Panc1 (cell line): ENCODE measurements at regions of chr17 and their contacts with region 1.

Region 1: GRCh38 chr17:76045844-76046463 is 18.8 kb upstream of the EVPL start:
- DNase-seq: no peak
- ATAC-seq: no peak
- H3K4me3 ChIP-seq: no peak overlapping the region
- H3K27ac ChIP-seq: no peak overlapping the region
- H3K4me1 ChIP-seq: no peaks in the 10 kb centered on the region
- H3K27me3 ChIP-seq: no peaks in the 10 kb centered on the region
- CTCF ChIP-seq: no peak

Region 2: DNA sequence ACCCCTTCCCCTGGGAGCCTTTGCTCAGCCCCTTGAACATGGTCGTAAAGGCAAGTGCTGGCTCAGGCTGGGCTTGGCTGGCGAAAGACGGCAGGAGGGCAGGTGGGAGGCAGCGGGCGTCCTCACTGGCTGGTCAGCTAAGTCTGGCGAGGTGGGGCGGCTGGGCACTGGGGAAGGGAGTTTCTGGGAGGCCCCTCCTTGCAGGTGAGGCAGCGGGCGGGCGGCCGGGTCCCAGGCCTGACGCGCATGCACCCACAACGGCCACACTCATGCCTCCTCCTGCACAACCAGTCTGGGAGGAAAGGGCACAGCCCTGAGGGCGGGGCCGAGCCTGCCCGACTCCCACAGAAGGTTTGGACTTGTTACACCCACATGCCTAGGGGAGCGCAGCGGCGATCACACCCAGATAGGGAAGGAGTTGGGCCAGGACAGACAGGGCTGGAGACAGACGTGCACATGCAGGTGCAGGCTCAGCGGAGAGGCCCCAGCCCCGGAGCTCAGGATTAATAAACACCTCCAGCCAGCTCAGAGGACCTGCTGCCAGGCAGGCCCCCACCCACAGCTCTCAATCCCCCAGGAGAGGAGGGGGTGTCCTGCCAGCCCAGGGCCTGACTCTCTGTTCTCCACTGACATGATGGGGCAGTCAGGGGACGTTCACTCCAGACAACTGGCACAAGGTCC is 18.7 kb before region 1 on chr17 and contains the start of gene EVPL:
- CTCF ChIA-PET with region 1: no interaction called
- POLR2A ChIA-PET with region 1: no interaction called
- in situ Hi-C with region 1: no loop called
- intact Hi-C with region 1: no loop called
- DNase-seq: no peak
- ATAC-seq: peak; percentile 93
- H3K4me3 ChIP-seq: peak within 1 kb of the TSS; percentile 59 to 63
- H3K27ac ChIP-seq: peak within 1 kb of the TSS; percentile 84
- H3K4me1 ChIP-seq: peaks cover 27% of the 10 kb centered on the region
- H3K27me3 ChIP-seq: no peaks in the 10 kb centered on the region
- CTCF ChIP-seq: no peak
- total RNA-seq, gene EVPL: 36.4 TPM

Region 3: DNA sequence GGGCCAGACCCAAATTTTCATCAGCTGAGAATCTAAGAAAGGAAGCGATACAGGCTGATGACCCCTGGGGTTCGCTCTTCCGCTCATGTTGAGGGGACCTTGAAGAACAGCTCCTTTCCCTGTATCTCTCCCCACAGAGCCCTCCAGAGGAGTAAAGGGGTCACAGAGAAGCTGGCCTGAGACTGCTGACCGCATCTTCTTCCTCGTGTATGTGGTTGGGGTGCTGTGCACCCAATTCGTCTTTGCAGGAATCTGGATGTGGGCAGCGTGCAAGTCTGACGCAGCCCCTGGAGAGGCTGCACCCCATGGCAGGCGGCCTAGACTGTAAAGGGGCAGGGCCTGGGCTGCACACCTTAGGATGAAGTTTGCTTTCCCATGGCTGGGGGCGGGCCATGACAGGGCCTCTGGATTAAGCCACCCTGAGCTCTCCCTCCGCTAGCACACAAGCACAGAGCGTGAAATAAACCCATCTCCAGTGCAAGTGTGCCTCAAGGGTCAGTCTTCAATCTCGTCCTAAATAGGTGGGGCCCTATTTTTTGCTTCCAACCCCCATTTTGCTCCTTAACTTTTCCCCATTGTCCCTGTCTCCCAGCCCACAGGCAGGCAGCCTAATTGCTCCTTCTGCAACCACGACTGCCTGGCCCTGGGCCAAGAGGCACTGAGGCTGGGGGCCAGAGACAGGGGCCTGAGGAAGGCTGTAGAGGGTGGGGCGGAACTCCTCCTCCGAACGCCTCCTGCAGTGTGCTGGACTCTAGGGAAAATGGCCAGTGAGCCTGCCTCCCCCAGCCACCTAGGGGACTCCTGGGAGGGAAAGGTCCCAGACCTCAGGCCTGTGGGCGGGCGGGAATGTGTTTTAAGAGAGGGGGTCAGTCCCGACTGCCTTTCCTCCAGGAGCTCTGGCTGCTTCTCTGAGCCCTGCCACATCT is 36.6 kb after region 1 on chr17:
- CTCF ChIA-PET with region 1: no interaction called
- POLR2A ChIA-PET with region 1: interaction called, 12 read pairs
- in situ Hi-C with region 1: no loop called
- intact Hi-C with region 1: no loop called
- DNase-seq: no peak
- ATAC-seq: no peak
- H3K4me3 ChIP-seq: no peak overlapping the region
- H3K27ac ChIP-seq: no peak overlapping the region
- H3K4me1 ChIP-seq: peaks cover 10% of the 10 kb centered on the region
- H3K27me3 ChIP-seq: no peaks in the 10 kb centered on the region
- CTCF ChIP-seq: no peak